CD4-positive, alpha-beta memory T cell (primary cell): ENCODE measurements at regions of chr12 and their contacts with region 1.

Region 1: GRCh38 chr12:96375841-96376604 is 24.2 kb downstream of the CDK17 start:
- DNase-seq: no peak
- H3K4me3 ChIP-seq: no peak overlapping the region
- H3K4me3 Mint-ChIP-seq: peak overlapping the region in 7 of 8 donors; percentile 9 to 67 (median 33)
- H3K27ac ChIP-seq: peak overlapping the region; percentile 68
- H3K27ac Mint-ChIP-seq: peak overlapping the region; percentile 30 to 97 (median 71)
- H3K4me1 ChIP-seq: peaks cover 87% of the 10 kb centered on the region
- H3K4me1 Mint-ChIP-seq: peaks cover 57 to 85% (median 69%) of the 10 kb centered on the region in 4 donors
- H3K27me3 ChIP-seq: no peaks in the 10 kb centered on the region
- H3K27me3 Mint-ChIP-seq: no peaks in the 10 kb centered on the region

Region 2: GRCh38 chr12:96327346-96327745 is 48.7 kb before region 1 on chr12:
- CTCF ChIA-PET with region 1: no interaction called
- POLR2A ChIA-PET with region 1: no interaction called
- intact Hi-C with region 1: loop called (anchors 5 kb)
- DNase-seq: no peak
- H3K4me3 ChIP-seq: no peak overlapping the region
- H3K4me3 Mint-ChIP-seq: peak overlapping the region in 2 of 8 donors; percentile 11 to 44
- H3K27ac ChIP-seq: no peak overlapping the region
- H3K27ac Mint-ChIP-seq: peak overlapping the region; percentile 43 to 88 (median 66)
- H3K4me1 ChIP-seq: peaks cover 47% of the 10 kb centered on the region
- H3K4me1 Mint-ChIP-seq: peaks cover 47 to 70% (median 57%) of the 10 kb centered on the region in 4 donors
- H3K27me3 ChIP-seq: no peaks in the 10 kb centered on the region
- H3K27me3 Mint-ChIP-seq: no peaks in the 10 kb centered on the region

Region 3: GRCh38 chr12:96343347-96343954 is 32.6 kb before region 1 on chr12:
- CTCF ChIA-PET with region 1: interaction called, 3 read pairs
- POLR2A ChIA-PET with region 1: interaction called, 4 read pairs
- intact Hi-C with region 1: loop called (anchors 5 kb)
- DNase-seq: peak; percentile 32 to 48 (median 41)
- H3K4me3 ChIP-seq: no peak overlapping the region
- H3K4me3 Mint-ChIP-seq: peak overlapping the region in 6 of 8 donors; percentile 11 to 63 (median 30)
- H3K27ac ChIP-seq: no peak overlapping the region
- H3K27ac Mint-ChIP-seq: peak overlapping the region in 4 of 7 donors; percentile 3 to 32 (median 23)
- H3K4me1 ChIP-seq: peaks cover 46% of the 10 kb centered on the region
- H3K4me1 Mint-ChIP-seq: peaks cover 35 to 65% (median 51%) of the 10 kb centered on the region in 4 donors
- H3K27me3 ChIP-seq: no peaks in the 10 kb centered on the region
- H3K27me3 Mint-ChIP-seq: no peaks in the 10 kb centered on the region

Region 4: GRCh38 chr12:96361074-96361473 is 14.9 kb before region 1 on chr12:
- CTCF ChIA-PET with region 1: interaction called, 4 read pairs
- POLR2A ChIA-PET with region 1: interaction called, 4 read pairs
- intact Hi-C with region 1: loop called (anchors 2 kb)
- DNase-seq: no peak
- H3K4me3 ChIP-seq: no peak overlapping the region
- H3K4me3 Mint-ChIP-seq: peak overlapping the region in 2 of 8 donors; percentile 24 to 64
- H3K27ac ChIP-seq: no peak overlapping the region
- H3K27ac Mint-ChIP-seq: peak overlapping the region in 1 of 7 donors; percentile 32
- H3K4me1 ChIP-seq: peaks cover 74% of the 10 kb centered on the region
- H3K4me1 Mint-ChIP-seq: peaks cover 52 to 84% (median 63%) of the 10 kb centered on the region in 4 donors
- H3K27me3 ChIP-seq: no peaks in the 10 kb centered on the region
- H3K27me3 Mint-ChIP-seq: no peaks in the 10 kb centered on the region